Activated T-helper 1 cell treated with anti-CD3 and anti-CD28 coated beads, Interleukin-12 subunit alpha, Interleukin-12 subunit beta, Interleukin-2, Interleukin-4 antibody, amounts not matched to agents 30 ng/mL and 10 ng/mL and 1 ng/mL, durations not matched to agents 14 hours and 24 hours and 36 hours (primary cell): ENCODE measurements at regions of chr19 and their contacts with region 1.

Region 1: DNA sequence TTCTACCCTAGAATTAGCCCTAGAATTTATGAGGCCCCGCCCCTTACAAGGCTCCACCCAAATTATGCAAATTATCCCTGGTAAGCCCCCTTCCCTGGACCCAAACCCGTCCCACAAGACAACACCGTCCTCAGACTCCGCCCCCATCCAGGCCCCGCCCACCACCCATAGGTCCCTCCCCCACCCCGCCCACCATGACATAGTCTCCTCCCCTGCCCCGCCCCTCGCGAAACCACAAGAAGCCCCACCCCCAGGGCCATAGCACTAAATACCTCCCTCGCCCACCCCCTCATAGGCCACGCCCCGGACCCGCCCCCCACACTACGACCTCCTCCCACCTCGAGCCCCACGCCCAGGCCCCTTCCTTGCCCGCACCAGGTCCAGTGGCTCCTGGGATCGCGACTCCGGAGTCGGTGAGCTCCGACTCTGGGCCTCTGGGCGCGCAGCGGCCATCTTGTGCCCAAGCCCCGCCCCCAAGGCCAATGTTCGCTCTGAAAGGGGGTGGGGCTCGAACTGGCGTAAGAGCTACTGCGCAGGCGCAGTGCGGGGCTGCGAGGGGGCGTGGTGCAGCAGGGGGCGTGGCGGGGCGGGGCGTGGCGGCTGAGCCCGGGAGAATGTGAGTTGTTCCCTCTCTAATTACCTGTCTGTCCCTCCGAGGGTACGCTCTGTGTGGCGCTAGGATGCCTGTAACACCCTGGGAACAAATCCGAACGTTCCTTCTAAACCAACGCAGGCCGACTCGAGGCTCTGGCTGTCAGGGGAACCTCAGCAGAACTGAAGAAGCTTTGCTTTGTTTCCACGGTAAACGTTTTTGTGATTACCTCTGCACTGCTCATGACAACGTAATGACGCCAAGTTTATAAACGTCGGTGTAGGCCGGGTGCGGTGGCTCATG is at the start of gene ZNF784:
- DNase-seq: peak; percentile 91
- H3K4me3 Mint-ChIP-seq: peak within 1 kb of the TSS; percentile 90
- H3K27ac Mint-ChIP-seq: peak within 1 kb of the TSS; percentile 98
- H3K4me1 Mint-ChIP-seq: peaks cover 46% of the 10 kb centered on the region
- H3K27me3 Mint-ChIP-seq: peaks cover 20% of the 10 kb centered on the region
- total RNA-seq, gene ZNF784: 3.0 and 4.9 TPM in 2 replicates

Region 2: GRCh38 chr19:55279770-55280643 is 344.3 kb before region 1 on chr19 and contains the start of gene HSPBP1:
- intact Hi-C with region 1: loop called (anchors 1 kb)
- DNase-seq: peak; percentile 95
- H3K4me3 Mint-ChIP-seq: peak within 1 kb of the TSS; percentile 99
- H3K27ac Mint-ChIP-seq: peak within 1 kb of the TSS; percentile 96
- H3K4me1 Mint-ChIP-seq: peaks cover 51% of the 10 kb centered on the region
- H3K27me3 Mint-ChIP-seq: peaks cover 7% of the 10 kb centered on the region
- total RNA-seq, gene HSPBP1: 66.4 and 69.6 TPM in 2 replicates

Region 3: DNA sequence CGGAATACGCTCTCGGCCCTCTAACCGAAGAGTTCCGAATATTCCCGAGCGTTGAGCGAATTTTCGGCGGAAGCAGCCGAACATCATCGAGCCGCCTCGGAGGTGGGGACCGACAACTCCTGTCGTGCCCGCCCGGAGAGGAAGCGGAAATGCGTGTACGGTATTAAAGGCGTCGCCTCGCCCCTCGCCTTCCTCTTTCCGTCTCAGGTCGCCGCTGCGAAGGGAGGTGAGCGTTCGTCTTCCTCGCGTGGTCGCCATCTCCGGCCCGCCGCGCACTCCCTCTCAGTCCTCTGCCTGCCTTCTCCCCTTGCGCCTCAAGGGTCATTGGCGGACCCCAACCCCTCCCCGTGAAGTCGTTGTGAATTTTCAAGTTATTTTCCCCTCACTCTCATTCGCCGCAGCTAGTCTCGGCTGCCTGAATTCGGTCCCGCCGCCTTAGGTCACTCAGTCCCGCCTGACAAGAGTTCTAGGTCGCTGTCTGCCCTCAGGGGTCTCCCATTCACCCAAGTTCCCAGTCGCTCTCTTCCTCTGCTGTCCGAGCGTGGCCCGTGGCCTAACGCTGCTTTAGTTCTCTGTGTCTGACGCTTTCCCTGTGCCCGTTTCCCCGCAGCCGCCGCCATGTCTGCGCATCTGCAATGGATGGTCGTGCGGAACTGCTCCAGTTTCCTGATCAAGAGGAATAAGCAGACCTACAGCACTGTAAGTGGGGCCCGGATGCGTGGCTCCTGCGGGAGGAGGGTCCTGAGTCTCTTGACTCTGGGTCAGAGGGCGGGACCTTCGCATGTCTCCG is 238.4 kb before region 1 on chr19 and contains the start of gene RPL28:
- intact Hi-C with region 1: no loop called
- DNase-seq: peak; percentile 99
- H3K4me3 Mint-ChIP-seq: peak within 1 kb of the TSS; percentile 99
- H3K27ac Mint-ChIP-seq: peak within 1 kb of the TSS; percentile 96
- H3K4me1 Mint-ChIP-seq: peaks cover 43% of the 10 kb centered on the region
- H3K27me3 Mint-ChIP-seq: no peaks in the 10 kb centered on the region
- total RNA-seq, gene RPL28: 1,835 and 1,847 TPM in 2 replicates

Region 4: GRCh38 chr19:55494172-55494761 is 130.1 kb before region 1 on chr19:
- intact Hi-C with region 1: no loop called
- DNase-seq: no peak
- H3K4me3 Mint-ChIP-seq: no peak overlapping the region
- H3K27ac Mint-ChIP-seq: no peak overlapping the region
- H3K4me1 Mint-ChIP-seq: no peaks in the 10 kb centered on the region
- H3K27me3 Mint-ChIP-seq: peaks cover 11% of the 10 kb centered on the region

Region 5: GRCh38 chr19:55586976-55587668 is 37.2 kb before region 1 on chr19:
- intact Hi-C with region 1: loop called (anchors 1 kb)
- DNase-seq: peak; percentile 88
- H3K4me3 Mint-ChIP-seq: peak overlapping the region; percentile 79
- H3K27ac Mint-ChIP-seq: no peak overlapping the region
- H3K4me1 Mint-ChIP-seq: peaks cover 19% of the 10 kb centered on the region
- H3K27me3 Mint-ChIP-seq: peaks cover 22% of the 10 kb centered on the region

Region 6: DNA sequence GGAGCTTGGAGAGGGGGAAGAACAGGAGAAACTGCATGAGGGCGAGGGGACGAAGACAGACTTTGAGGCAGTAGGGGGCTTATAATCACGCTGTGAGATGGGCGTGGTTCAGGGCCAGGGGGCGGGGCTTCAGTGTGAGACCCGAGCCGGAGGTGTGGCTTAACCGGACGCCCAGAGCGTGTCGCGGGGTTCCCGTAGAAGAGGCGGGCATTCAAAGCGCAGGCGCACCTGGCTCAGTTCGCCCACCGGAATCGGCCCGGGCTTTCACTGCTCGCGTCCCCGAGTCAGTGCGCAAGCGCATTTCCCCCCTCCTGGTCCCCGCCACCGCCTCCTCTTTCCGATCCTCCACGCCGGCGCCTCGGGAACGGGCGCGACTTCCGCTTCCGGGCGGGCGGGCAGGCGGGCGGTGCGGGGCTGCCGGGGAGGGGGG is 19.1 kb before region 1 on chr19:
- intact Hi-C with region 1: loop called (anchors 1 kb)
- DNase-seq: peak; percentile 98
- H3K4me3 Mint-ChIP-seq: peak overlapping the region; percentile 86
- H3K27ac Mint-ChIP-seq: peak overlapping the region; percentile 95
- H3K4me1 Mint-ChIP-seq: peaks cover 45% of the 10 kb centered on the region
- H3K27me3 Mint-ChIP-seq: no peaks in the 10 kb centered on the region

Region 7: DNA sequence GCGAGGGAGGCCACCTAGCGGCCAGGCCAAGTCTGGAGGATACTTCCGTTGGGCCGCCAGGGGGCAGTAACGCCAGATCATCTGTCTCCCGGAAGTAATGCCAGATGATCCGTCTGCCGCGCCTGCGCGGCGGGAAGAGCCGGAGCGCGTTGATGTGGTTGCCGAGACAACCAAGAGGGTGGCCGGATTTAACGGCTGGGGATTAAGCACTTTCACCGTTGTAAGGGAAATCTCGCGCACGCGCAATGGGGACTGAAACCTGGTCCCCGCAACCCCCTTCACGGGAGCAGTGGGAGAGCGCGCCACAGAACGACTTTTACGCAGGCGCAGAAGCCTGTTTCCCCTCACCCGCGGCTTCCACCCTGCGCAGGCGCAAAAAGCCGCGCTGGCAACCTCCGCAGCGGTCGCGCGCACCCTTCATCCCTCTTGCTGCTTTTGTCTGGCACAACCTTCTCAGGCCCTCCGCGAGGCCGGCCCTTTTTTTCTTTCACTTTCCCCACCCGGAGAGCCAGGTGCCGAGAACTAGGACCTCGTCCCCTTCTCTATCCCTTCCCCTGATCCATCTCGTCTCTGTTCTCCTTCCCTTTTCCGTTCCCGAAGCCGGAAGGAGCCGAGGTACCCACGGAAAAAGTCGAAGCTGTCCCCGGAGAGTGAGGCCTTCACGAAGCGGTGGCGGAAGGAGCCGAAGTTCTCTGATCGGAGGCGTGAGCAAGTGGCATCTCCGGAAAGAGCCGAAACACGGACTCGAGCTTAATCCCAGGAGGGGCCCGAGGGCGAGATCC is 29.6 kb after region 1 on chr19:
- intact Hi-C with region 1: loop called (anchors 1 kb)
- DNase-seq: peak; percentile 99
- H3K4me3 Mint-ChIP-seq: peak overlapping the region; percentile 93
- H3K27ac Mint-ChIP-seq: peak overlapping the region; percentile 99
- H3K4me1 Mint-ChIP-seq: peaks cover 43% of the 10 kb centered on the region
- H3K27me3 Mint-ChIP-seq: no peaks in the 10 kb centered on the region